Stomach (tissue), 19 donors: ENCODE measurements at regions of chr16 and their contacts with region 1.

Region 1: DNA sequence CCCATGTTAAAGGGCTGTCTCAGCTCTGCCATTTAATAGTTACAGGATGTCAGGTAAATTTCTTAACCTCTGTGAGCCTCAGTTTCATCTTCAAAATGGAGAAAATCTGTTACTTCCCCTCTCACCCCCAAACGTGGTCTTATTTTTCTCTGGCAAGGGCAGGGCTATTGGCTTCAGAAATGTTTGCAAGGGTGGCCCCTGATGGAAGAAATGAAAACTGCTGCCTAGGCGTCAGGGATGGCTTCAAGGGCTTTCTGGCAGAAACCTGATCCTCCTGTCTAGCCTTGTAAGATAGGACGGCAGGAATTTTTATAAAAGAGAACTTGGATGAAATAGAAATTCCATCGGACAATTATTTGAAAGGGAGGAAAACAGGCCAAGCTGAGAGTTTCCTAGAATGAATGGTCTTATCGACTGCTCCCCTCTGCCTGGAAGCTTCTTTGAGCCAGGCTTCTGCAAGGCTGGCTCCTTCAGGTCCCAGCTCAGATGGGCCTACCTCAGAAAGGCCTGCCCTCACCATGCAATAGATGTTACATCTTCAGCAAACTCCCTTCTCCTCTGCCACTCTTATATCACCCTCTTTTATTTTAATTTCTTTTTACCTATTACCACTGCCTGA is 43.0 kb upstream of the TANGO6 start:
- DNase-seq: peak; percentile 66 to 93
- H3K4me3 ChIP-seq: no peak overlapping the region
- H3K27ac ChIP-seq: peak overlapping the region in 2 of 5 donors; percentile 31 to 32
- H3K4me1 ChIP-seq: peaks cover 6 to 29% (median 13%) of the 10 kb centered on the region in 4 donors
- H3K27me3 ChIP-seq: no peaks in the 10 kb centered on the region
- CTCF ChIP-seq: peak in 5 of 7 experiments; percentile 52 to 66 (median 64)
- EP300 ChIP-seq: no peak
- POLR2A ChIP-seq: no peak

Region 2: DNA sequence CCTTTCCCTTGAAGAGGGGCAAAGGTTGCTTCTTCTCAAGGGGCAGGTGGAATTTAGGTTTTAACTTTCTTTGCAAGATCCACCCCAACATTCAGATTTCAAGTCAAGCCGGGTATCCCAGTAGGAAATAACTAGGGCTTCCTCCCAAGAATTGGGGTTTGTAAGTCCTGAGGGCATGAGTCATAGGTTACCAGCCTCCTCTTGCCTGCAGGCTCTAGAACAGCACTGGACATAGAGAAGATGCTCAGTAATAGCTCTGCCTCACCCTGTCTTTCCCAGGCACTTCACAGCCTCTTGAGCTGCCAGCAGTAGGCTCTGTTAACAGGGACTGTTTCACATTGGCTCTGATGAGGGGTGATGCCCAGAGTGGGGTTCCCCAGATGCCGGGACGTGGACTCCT is 297.0 kb before region 1 on chr16:
- intact Hi-C with region 1: no loop called
- DNase-seq: no peak
- H3K4me3 ChIP-seq: no peak overlapping the region
- H3K27ac ChIP-seq: no peak overlapping the region
- H3K4me1 ChIP-seq: no peaks in the 10 kb centered on the region
- H3K27me3 ChIP-seq: peaks cover 0 to 3% (median 0%) of the 10 kb centered on the region in 3 donors
- CTCF ChIP-seq: no peak
- EP300 ChIP-seq: no peak
- POLR2A ChIP-seq: no peak

Region 3: DNA sequence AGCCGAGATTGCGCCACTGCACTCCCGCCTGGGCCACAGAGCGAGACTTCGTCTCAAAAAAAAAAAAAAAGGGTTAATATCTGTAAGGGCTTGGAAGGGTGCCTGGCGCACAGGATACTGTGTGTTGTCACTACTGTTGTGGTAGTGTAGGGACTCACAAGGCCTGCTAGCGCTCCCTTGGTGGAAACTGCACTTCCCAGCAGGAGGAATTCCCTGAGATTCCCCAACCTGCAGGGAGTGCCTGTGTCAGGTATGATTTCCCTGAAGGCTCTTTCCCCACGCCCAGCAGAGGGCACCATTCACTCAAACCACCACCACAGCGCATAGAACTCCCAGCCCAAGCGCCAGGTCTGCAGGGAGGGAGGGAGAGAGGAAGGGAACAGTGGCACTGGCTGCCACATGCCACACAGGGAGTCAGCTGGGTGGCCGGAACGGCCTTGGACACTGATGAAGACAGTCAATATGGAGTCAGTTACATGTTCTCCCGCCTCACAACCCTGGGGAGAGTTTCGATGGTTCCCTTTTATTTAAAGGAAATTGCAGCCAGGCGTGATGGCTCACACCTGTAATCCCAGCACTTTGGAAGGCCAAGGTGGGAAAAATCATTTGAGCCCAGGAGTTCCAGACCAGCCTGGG is 96.0 kb before region 1 on chr16:
- intact Hi-C with region 1: loop called (anchors 10 kb)
- DNase-seq: peak; percentile 92 to 94
- H3K4me3 ChIP-seq: no peak overlapping the region
- H3K27ac ChIP-seq: no peak overlapping the region
- H3K4me1 ChIP-seq: peaks cover 0 to 21% (median 12%) of the 10 kb centered on the region in 4 donors
- H3K27me3 ChIP-seq: no peaks in the 10 kb centered on the region
- CTCF ChIP-seq: peak in 5 of 7 experiments; percentile 59 to 95 (median 78)
- EP300 ChIP-seq: no peak
- POLR2A ChIP-seq: no peak